SK-N-SH (cell line): ENCODE measurements at regions of chr1 and their contacts with region 1.

Region 1: GRCh38 chr1:208093754-208094719 is 150.1 kb downstream of the PLXNA2 start:
- DNase-seq: peak; percentile 67
- H3K4me3 ChIP-seq: peak overlapping the region in 1 of 2 experiments; percentile 8; a peak in 1 of 4 replicates
- H3K27ac ChIP-seq: peak overlapping the region in 1 of 2 experiments; percentile 71; a peak in 2 of 4 replicates
- H3K4me1 ChIP-seq: peaks cover 1 to 24% of the 10 kb centered on the region in 2 experiments; a peak in 2 of 4 replicates
- H3K27me3 ChIP-seq: no peaks in the 10 kb centered on the region
- CTCF ChIP-seq: peak; percentile 88
- EP300 ChIP-seq: no peak
- RAD21 ChIP-seq: peak; percentile 83

Region 2: DNA sequence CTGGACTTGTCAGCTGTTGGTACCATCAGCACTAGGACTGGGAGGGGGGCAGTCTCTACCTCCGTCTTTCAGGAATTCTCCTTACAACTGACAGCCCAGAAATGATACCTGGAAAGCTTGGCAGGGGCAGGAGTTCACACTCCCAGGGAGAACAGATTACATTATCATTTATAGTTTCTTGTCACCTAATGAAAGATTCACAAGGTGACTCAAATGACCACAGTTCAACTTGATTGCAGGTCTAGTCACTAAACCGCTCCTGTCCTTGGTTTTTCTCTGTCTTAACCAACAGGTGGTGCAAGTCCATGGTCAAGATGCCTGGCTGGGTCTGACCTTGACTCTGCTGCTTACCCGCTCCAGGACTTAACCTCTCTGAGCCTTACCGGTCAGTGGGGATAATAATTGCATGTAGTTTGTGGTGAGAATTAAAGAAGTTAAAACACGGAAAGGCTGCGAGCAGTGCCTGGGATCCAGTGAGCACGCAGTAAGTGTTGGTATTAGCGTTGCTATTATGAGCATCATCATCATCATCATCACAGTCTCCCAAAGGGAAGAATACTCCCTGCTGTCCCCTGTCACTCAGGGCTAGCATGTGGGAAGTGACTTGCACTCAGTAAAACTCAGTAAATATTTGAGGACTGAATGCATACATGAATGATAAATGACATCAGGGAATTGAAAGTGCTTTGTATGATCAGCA is 57.8 kb before region 1 on chr1:
- CTCF ChIA-PET with region 1: interaction called, 30 read pairs
- POLR2A ChIA-PET with region 1: no interaction called
- DNase-seq: peak; percentile 58
- H3K4me3 ChIP-seq: no peak overlapping the region
- H3K27ac ChIP-seq: no peak overlapping the region
- H3K4me1 ChIP-seq: peaks cover 0 to 4% of the 10 kb centered on the region in 2 experiments; a peak in 1 of 4 replicates
- H3K27me3 ChIP-seq: no peaks in the 10 kb centered on the region
- CTCF ChIP-seq: peak; percentile 42
- EP300 ChIP-seq: no peak
- RAD21 ChIP-seq: peak; percentile 60

Region 3: GRCh38 chr1:208065862-208066261 is 28.2 kb before region 1 on chr1:
- CTCF ChIA-PET with region 1: interaction called, 30 read pairs
- POLR2A ChIA-PET with region 1: no interaction called
- DNase-seq: no peak
- H3K4me3 ChIP-seq: no peak overlapping the region
- H3K27ac ChIP-seq: no peak overlapping the region
- H3K4me1 ChIP-seq: peaks cover 0 to 19% of the 10 kb centered on the region in 2 experiments; a peak in 2 of 4 replicates
- H3K27me3 ChIP-seq: no peaks in the 10 kb centered on the region
- CTCF ChIP-seq: no peak
- EP300 ChIP-seq: no peak
- RAD21 ChIP-seq: no peak

Region 4: DNA sequence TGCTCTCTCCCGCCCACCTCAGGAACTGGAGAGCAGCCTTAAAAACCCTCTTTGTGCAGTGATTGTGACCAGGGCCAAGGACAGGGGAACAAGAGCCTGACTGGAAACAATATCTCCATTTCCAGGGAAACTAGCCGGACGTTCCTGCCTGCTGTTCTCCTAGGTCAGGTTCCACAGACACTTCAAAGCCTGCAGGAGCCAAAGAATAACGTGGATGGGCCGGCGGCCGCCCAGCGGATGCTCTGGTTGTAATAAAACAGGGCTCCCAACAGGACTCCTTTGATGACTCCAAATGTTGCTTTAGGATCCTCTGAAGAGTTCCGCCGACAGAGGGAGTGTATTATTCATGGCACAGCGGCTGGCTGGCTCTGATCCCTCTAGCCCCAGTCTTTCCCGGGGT is 12.1 kb before region 1 on chr1:
- CTCF ChIA-PET with region 1: interaction called, 10 read pairs
- POLR2A ChIA-PET with region 1: no interaction called
- DNase-seq: no peak
- H3K4me3 ChIP-seq: no peak overlapping the region
- H3K27ac ChIP-seq: no peak overlapping the region
- H3K4me1 ChIP-seq: peaks cover 7 to 57% of the 10 kb centered on the region in 2 experiments; a peak in 3 of 4 replicates
- H3K27me3 ChIP-seq: no peaks in the 10 kb centered on the region
- CTCF ChIP-seq: no peak
- EP300 ChIP-seq: no peak
- RAD21 ChIP-seq: no peak

Region 5: DNA sequence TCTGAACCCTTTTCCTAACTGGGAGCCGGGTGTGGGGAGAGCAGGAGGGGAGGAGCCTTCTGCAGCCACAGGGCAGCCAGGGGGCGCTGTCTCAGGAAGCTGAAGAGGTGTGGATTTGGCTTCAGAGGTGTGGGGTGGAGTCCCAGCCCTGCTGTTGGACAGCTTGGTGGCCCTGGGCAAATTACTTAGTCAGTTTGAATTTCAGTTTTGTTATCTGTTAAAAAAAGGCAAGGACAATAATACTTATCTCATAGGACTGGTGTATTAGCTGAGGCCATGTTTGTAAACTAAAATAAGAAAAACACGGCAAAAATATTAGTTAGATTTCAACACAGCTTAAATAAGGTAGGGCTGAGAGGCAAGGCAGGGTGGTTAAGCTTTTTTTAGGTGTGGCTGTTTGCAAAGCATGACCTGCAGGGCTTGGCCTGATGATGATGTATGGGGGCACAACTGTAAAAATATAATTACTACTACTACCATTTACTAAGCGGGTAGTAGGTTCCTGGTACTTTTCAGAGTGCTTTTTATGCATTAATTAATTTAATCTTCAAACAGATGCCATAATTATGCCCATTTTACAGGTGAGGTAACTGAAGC is 38.3 kb after region 1 on chr1:
- CTCF ChIA-PET with region 1: interaction called, 12 read pairs
- POLR2A ChIA-PET with region 1: no interaction called
- DNase-seq: peak; percentile 72
- H3K4me3 ChIP-seq: no peak overlapping the region; a peak in 1 of 4 replicates
- H3K27ac ChIP-seq: no peak overlapping the region
- H3K4me1 ChIP-seq: peaks cover 9 to 46% of the 10 kb centered on the region in 2 experiments; a peak in 2 of 4 replicates
- H3K27me3 ChIP-seq: no peaks in the 10 kb centered on the region
- CTCF ChIP-seq: peak; percentile 94
- EP300 ChIP-seq: no peak
- RAD21 ChIP-seq: peak; percentile 61